Ascending aorta (tissue), 2 donors: ENCODE measurements at regions of chr11 and their contacts with region 1.

Region 1: GRCh38 chr11:103794262-103794661 is 242.2 kb upstream of the DDI1 start:
- DNase-seq: no peak
- H3K4me3 ChIP-seq: no peak overlapping the region
- H3K27ac ChIP-seq: peak overlapping the region in 1 of 2 donors; percentile 18
- H3K4me1 ChIP-seq: no peaks in the 10 kb centered on the region
- H3K27me3 ChIP-seq: no peaks in the 10 kb centered on the region
- CTCF ChIP-seq: no peak

Region 2: GRCh38 chr11:103947546-103947919 is 153.3 kb after region 1 on chr11:
- intact Hi-C with region 1: loop called (anchors 5 kb)
- DNase-seq: peak in 1 of 2 donors; percentile 63
- H3K4me3 ChIP-seq: no peak overlapping the region
- H3K27ac ChIP-seq: peak overlapping the region; percentile 52 to 63
- H3K4me1 ChIP-seq: peaks cover 0 to 20% of the 10 kb centered on the region in 2 donors
- H3K27me3 ChIP-seq: no peaks in the 10 kb centered on the region
- CTCF ChIP-seq: no peak